ENCODE measurements at regions of chr18 and their contacts with region 1.

Region 1: GRCh38 chr18:58671111-58671631 is at the start of gene MALT1:
- DNase-seq: peak; percentile 68
- ATAC-seq: peak; percentile 83
- H3K4me3 ChIP-seq: peak within 1 kb of the TSS; percentile 68 to 75
- H3K27ac ChIP-seq: peak within 1 kb of the TSS; percentile 92
- H3K4me1 ChIP-seq: peaks cover 56 to 67% of the 10 kb centered on the region in 2 experiments
- H3K27me3 ChIP-seq: no peaks in the 10 kb centered on the region
- CTCF ChIP-seq: no peak
- POLR2A ChIP-seq: peak; percentile 30
- RAD21 ChIP-seq: no peak
- total RNA-seq, gene MALT1: 41.1 TPM

Region 2: GRCh38 chr18:58113337-58113736 is 557.8 kb before region 1 on chr18:
- CTCF ChIA-PET with region 1: no interaction called
- POLR2A ChIA-PET with region 1: no interaction called
- RAD21 ChIA-PET with region 1: no interaction called
- intact Hi-C with region 1: no loop called
- DNase-seq: no peak
- ATAC-seq: no peak
- H3K4me3 ChIP-seq: no peak overlapping the region
- H3K27ac ChIP-seq: no peak overlapping the region
- H3K4me1 ChIP-seq: peaks cover 11% of the 10 kb centered on the region in 2 experiments
- H3K27me3 ChIP-seq: no peaks in the 10 kb centered on the region
- CTCF ChIP-seq: no peak
- POLR2A ChIP-seq: no peak
- RAD21 ChIP-seq: no peak

Region 3: DNA sequence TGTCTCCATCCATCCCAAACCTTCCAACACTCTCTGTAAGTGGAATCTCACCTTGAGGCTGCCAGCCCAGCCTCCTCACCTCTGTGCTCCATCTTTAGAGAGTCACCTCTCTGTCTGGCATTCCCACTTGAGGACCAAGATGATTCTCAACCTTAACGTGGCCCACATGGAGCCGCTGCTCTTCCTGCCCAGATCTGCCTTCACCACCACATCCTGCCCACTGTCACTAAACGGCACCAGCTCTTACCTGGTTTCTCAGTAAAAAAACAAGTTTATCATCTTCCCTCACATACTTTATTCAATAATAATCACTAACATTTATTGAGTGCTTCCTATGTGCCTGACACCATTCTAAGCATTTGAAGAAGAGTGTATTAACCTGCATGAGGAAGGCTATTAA is 546.7 kb before region 1 on chr18:
- CTCF ChIA-PET with region 1: no interaction called
- POLR2A ChIA-PET with region 1: no interaction called
- RAD21 ChIA-PET with region 1: no interaction called
- intact Hi-C with region 1: no loop called
- DNase-seq: no peak
- ATAC-seq: no peak
- H3K4me3 ChIP-seq: no peak overlapping the region
- H3K27ac ChIP-seq: no peak overlapping the region
- H3K4me1 ChIP-seq: no peaks in the 10 kb centered on the region
- H3K27me3 ChIP-seq: no peaks in the 10 kb centered on the region
- CTCF ChIP-seq: no peak
- POLR2A ChIP-seq: no peak
- RAD21 ChIP-seq: no peak

Region 4: DNA sequence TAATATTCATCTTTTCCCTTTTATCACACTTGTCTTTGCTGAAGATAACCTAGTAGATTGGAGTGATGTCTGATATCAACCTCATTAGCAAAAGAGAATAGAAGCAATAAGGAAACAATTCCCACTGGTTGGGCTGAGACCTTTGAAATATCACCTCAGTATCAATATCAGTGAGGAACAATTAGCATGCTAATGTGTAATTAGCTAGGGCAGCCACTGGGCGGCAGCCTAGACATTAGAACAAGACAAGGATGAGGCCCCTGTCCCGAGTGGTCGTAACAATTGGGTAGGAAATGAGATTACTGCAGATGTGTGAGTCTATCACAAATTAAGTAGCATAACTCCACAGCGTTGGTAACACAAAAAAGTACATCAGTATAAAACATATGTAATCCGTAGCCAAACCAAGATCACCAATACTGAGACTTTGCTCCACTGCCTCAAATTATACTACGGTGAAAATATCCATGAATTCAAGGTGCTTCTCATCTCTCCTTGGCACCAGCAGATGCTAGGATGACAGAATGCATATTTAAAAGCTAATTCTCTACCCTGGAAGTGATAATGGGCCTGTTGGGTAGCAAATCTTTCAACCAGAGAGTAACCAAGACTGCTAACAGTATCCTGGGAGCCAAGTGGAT is 141.3 kb before region 1 on chr18:
- CTCF ChIA-PET with region 1: interaction called, 3 read pairs
- POLR2A ChIA-PET with region 1: interaction called, 4 read pairs
- RAD21 ChIA-PET with region 1: no interaction called
- intact Hi-C with region 1: loop called (anchors 5 kb)
- DNase-seq: peak; percentile 35
- ATAC-seq: peak; percentile 93
- H3K4me3 ChIP-seq: no peak overlapping the region
- H3K27ac ChIP-seq: no peak overlapping the region
- H3K4me1 ChIP-seq: no peaks in the 10 kb centered on the region
- H3K27me3 ChIP-seq: no peaks in the 10 kb centered on the region
- CTCF ChIP-seq: peak; percentile 76 to 93 (median 88); a peak in 5 of 6 replicates
- POLR2A ChIP-seq: no peak
- RAD21 ChIP-seq: peak; percentile 96

Region 5: GRCh38 chr18:58541789-58542425 is 129.3 kb before region 1 on chr18:
- CTCF ChIA-PET with region 1: no interaction called
- POLR2A ChIA-PET with region 1: interaction called, 24 read pairs
- RAD21 ChIA-PET with region 1: no interaction called
- intact Hi-C with region 1: loop called (anchors 1 kb)
- DNase-seq: peak; percentile 88
- ATAC-seq: peak; percentile 83
- H3K4me3 ChIP-seq: peak overlapping the region in 1 of 2 experiments; percentile 36; a peak in 2 of 4 replicates
- H3K27ac ChIP-seq: peak overlapping the region; percentile 63; the same call in 1 of the 2 replicates
- H3K4me1 ChIP-seq: peaks cover 26 to 75% of the 10 kb centered on the region in 2 experiments
- H3K27me3 ChIP-seq: no peaks in the 10 kb centered on the region
- CTCF ChIP-seq: no peak
- POLR2A ChIP-seq: no peak
- RAD21 ChIP-seq: no peak; the same call in 1 of the 2 replicates

Region 6: GRCh38 chr18:58611471-58612131 is 59.6 kb before region 1 on chr18:
- CTCF ChIA-PET with region 1: no interaction called
- POLR2A ChIA-PET with region 1: interaction called, 5 read pairs
- RAD21 ChIA-PET with region 1: no interaction called
- intact Hi-C with region 1: loop called (anchors 5 kb)
- DNase-seq: no peak
- ATAC-seq: peak; percentile 74
- H3K4me3 ChIP-seq: peak overlapping the region in 1 of 2 experiments; percentile 37; a peak in 2 of 4 replicates
- H3K27ac ChIP-seq: peak overlapping the region; percentile 48; the same call in 1 of the 2 replicates
- H3K4me1 ChIP-seq: peaks cover 18 to 34% of the 10 kb centered on the region in 2 experiments
- H3K27me3 ChIP-seq: no peaks in the 10 kb centered on the region
- CTCF ChIP-seq: no peak
- POLR2A ChIP-seq: no peak
- RAD21 ChIP-seq: no peak

Region 7: GRCh38 chr18:58682429-58683069 is 11.4 kb after region 1 on chr18:
- CTCF ChIA-PET with region 1: no interaction called
- POLR2A ChIA-PET with region 1: interaction called, 13 read pairs
- RAD21 ChIA-PET with region 1: interaction called in 1 of 2 experiments, 4 read pairs
- intact Hi-C with region 1: no loop called
- DNase-seq: peak; percentile 33
- ATAC-seq: peak; percentile 42; the same call in 1 of the 2 replicates
- H3K4me3 ChIP-seq: no peak overlapping the region
- H3K27ac ChIP-seq: peak overlapping the region; percentile 23; the same call in 1 of the 2 replicates
- H3K4me1 ChIP-seq: peaks cover 7 to 14% of the 10 kb centered on the region in 2 experiments
- H3K27me3 ChIP-seq: no peaks in the 10 kb centered on the region
- CTCF ChIP-seq: no peak
- POLR2A ChIP-seq: no peak
- RAD21 ChIP-seq: no peak